Caco-2 (cell line): ENCODE measurements at regions of chr2 and their contacts with region 1.

Region 1: GRCh38 chr2:116378786-116379185 is 1435.7 kb upstream of the DDX18 start:
- DNase-seq: no peak
- H3K4me3 ChIP-seq: no peak overlapping the region
- H3K4me3 Mint-ChIP-seq: no peak overlapping the region
- H3K27ac Mint-ChIP-seq: no peak overlapping the region
- H3K4me1 ChIP-seq: no peaks in the 10 kb centered on the region
- H3K4me1 Mint-ChIP-seq: no peaks in the 10 kb centered on the region
- H3K27me3 ChIP-seq: no peaks in the 10 kb centered on the region
- H3K27me3 Mint-ChIP-seq: peaks cover 4% of the 10 kb centered on the region
- CTCF ChIP-seq: no peak

Region 2: GRCh38 chr2:116340690-116341089 is 38.1 kb before region 1 on chr2:
- CTCF ChIA-PET with region 1: no interaction called
- POLR2A ChIA-PET with region 1: no interaction called
- intact Hi-C with region 1: loop called (anchors 1 kb)
- DNase-seq: no peak
- H3K4me3 ChIP-seq: no peak overlapping the region
- H3K4me3 Mint-ChIP-seq: no peak overlapping the region
- H3K27ac Mint-ChIP-seq: no peak overlapping the region
- H3K4me1 ChIP-seq: no peaks in the 10 kb centered on the region
- H3K4me1 Mint-ChIP-seq: no peaks in the 10 kb centered on the region
- H3K27me3 ChIP-seq: no peaks in the 10 kb centered on the region
- H3K27me3 Mint-ChIP-seq: peaks cover 2% of the 10 kb centered on the region
- CTCF ChIP-seq: no peak